Natural killer cell (primary cell): ENCODE measurements at regions of chr1 and their contacts with region 1.

Region 1: GRCh38 chr1:12208764-12209494 is 20.9 kb upstream of the VPS13D start:
- DNase-seq: peak; percentile 89 to 92
- ATAC-seq: peak; percentile 85 to 88 (median 87)
- H3K4me3 ChIP-seq: no peak overlapping the region
- H3K4me3 Mint-ChIP-seq: peak overlapping the region; percentile 21
- H3K27ac ChIP-seq: peak overlapping the region; percentile 44
- H3K27ac Mint-ChIP-seq: peak overlapping the region; percentile 79 to 88
- H3K4me1 ChIP-seq: peaks cover 46% of the 10 kb centered on the region
- H3K4me1 Mint-ChIP-seq: peaks cover 27 to 52% of the 10 kb centered on the region in 2 donors
- H3K27me3 ChIP-seq: no peaks in the 10 kb centered on the region
- H3K27me3 Mint-ChIP-seq: no peaks in the 10 kb centered on the region
- CTCF ChIP-seq: peak; percentile 90

Region 2: DNA sequence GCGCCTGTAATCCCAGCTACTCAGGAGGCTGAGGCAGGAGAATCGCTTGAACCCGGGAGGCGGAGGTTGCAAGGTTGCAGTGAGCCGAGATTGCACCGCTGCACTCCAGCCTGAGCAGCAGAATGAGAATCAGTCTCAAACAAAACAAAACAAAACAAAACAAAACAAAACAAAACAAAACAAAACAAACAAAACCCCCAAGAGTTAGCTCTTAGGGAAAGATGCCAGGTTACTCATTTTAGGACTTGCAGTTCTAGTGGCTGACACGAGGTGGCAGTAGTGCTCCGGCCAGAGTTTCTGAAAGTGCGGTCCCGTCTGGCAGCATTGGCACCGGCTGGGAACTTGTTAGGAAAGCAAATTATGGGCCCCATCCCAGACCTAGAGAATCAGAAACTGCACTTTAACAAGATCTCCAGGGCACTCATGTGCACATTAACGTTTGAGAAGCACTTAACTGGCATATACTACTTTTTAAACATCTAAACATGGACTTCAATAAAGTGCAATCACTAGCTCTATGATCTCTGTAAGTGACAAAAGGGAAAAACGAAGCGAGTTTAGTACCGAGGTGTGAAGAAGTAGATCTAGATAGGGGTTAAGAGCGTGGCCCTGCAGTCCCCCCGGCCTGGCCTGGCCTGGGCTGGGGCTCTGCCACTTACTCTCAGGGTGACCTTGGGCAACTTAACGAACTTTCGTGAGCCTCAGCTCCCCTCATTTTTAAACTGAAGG is 84.1 kb before region 1 on chr1:
- intact Hi-C with region 1: loop called (anchors 1 kb)
- DNase-seq: peak; percentile 79 to 90
- ATAC-seq: peak; percentile 78 to 96 (median 87)
- H3K4me3 ChIP-seq: no peak overlapping the region
- H3K4me3 Mint-ChIP-seq: peak overlapping the region; percentile 67
- H3K27ac ChIP-seq: no peak overlapping the region
- H3K27ac Mint-ChIP-seq: peak overlapping the region; percentile 64 to 74
- H3K4me1 ChIP-seq: peaks cover 27% of the 10 kb centered on the region
- H3K4me1 Mint-ChIP-seq: peaks cover 16 to 30% of the 10 kb centered on the region in 2 donors
- H3K27me3 ChIP-seq: no peaks in the 10 kb centered on the region
- H3K27me3 Mint-ChIP-seq: peaks cover 0 to 5% of the 10 kb centered on the region in 2 donors
- CTCF ChIP-seq: peak; percentile 90

Region 3: DNA sequence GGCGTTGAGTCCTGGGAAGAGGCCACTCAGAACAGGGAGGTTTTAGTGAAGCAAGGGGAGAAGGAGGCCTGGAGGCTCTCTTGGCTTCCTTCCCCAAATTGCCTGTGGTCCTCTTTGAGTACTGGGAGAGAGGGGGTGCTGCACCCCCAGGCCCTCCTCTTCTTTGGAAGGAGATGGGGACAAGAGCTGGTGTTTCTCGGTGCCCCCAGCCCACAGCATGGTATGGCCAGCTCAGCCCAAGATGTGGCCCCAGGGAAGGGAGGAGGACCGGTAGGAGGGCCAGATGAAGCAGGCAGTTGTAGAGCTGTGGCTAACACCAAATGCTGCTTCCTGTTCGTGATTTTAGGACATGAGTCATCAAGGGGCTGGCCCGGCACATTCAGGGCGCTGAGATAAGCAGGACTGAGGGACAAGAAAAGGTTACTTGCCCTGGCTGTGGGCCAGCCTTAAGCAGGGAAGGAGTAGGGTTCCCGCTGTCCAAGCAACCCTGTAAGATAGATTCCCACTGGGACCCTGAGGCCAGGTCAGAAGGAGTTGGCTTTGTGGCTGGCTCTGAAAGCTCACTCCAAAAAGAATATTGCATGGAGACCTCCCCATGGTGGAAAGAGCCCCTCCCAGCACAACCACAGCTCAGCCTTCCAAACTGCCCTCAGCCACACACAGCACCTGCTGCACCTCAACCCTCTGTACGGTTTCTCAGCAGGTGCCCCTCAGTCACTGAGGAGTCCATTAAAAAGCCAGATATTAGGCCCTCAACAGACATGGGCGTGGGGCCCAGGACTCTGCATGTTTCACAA is 47.1 kb before region 1 on chr1:
- intact Hi-C with region 1: loop called (anchors 5 kb)
- DNase-seq: peak; percentile 73 to 90
- ATAC-seq: peak; percentile 78 to 95 (median 89)
- H3K4me3 ChIP-seq: no peak overlapping the region
- H3K4me3 Mint-ChIP-seq: peak overlapping the region; percentile 70
- H3K27ac ChIP-seq: peak overlapping the region; percentile 86
- H3K27ac Mint-ChIP-seq: peak overlapping the region; percentile 93 to 97
- H3K4me1 ChIP-seq: peaks cover 97% of the 10 kb centered on the region
- H3K4me1 Mint-ChIP-seq: peaks cover 59 to 69% of the 10 kb centered on the region in 2 donors
- H3K27me3 ChIP-seq: no peaks in the 10 kb centered on the region
- H3K27me3 Mint-ChIP-seq: no peaks in the 10 kb centered on the region
- CTCF ChIP-seq: no peak